ENCODE measurements at regions of chr15 and their contacts with region 1.

Region 1: DNA sequence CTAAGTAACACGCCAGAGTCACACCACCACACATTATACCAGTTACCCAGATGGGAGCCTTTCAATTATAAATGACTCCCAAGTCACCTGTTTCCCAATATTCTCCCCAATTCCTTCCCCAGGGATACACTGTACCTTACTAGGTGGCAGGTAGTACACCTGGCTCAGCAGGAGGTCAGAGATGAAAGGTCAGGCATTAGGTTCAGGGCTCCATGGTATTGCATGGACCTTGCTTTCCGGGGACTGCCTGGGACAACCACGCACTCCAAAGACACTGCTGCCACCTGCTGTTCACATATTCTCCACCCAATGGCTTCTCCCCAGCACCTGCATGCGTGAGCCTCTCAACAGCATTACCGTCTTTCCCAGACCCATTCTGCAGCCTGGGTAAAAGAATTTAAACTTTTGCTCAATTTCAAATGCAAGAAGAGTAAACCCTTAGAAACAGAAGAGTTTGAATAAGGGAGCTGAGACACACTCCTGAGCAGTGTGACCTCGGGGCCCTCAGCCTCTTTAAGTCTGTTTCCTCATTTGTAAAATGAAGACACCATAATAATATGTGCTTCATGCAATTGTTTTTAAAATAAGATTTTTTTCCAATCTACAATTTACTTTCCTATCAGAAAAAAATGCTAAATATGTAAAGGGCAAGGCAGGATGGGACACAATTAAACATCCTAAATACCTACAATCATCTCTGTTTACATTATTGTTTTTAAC is 28.0 kb upstream of the LACTB start:
- DNase-seq: peak; percentile 82
- H3K4me3 ChIP-seq: no peak overlapping the region
- H3K27ac ChIP-seq: no peak overlapping the region
- H3K4me1 ChIP-seq: no peaks in the 10 kb centered on the region
- H3K27me3 ChIP-seq: no peaks in the 10 kb centered on the region
- CTCF ChIP-seq: peak; percentile 73 to 94 (median 92)
- POLR2A ChIP-seq: no peak

Region 2: GRCh38 chr15:62847900-62848489 is 245.7 kb before region 1 on chr15:
- intact Hi-C with region 1: loop called (anchors 5 kb)
- DNase-seq: no peak
- H3K4me3 ChIP-seq: no peak overlapping the region
- H3K27ac ChIP-seq: no peak overlapping the region
- H3K4me1 ChIP-seq: no peaks in the 10 kb centered on the region
- H3K27me3 ChIP-seq: no peaks in the 10 kb centered on the region
- CTCF ChIP-seq: peak; percentile 14 to 46 (median 42)
- POLR2A ChIP-seq: no peak

Region 3: GRCh38 chr15:63048115-63048775 is 45.4 kb before region 1 on chr15:
- intact Hi-C with region 1: loop called (anchors 2 kb)
- DNase-seq: peak; percentile 89
- H3K4me3 ChIP-seq: peak overlapping the region; percentile 63 to 86
- H3K27ac ChIP-seq: peak overlapping the region; percentile 91 to 95
- H3K4me1 ChIP-seq: peaks cover 33% of the 10 kb centered on the region
- H3K27me3 ChIP-seq: no peaks in the 10 kb centered on the region
- CTCF ChIP-seq: peak; percentile 96 to 97 (median 96)
- POLR2A ChIP-seq: peak; percentile 63

Measured in prostate gland (tissue), 2 donors.